Caco-2 (cell line): ENCODE measurements at regions of chr2 and their contacts with region 1.

Region 1: DNA sequence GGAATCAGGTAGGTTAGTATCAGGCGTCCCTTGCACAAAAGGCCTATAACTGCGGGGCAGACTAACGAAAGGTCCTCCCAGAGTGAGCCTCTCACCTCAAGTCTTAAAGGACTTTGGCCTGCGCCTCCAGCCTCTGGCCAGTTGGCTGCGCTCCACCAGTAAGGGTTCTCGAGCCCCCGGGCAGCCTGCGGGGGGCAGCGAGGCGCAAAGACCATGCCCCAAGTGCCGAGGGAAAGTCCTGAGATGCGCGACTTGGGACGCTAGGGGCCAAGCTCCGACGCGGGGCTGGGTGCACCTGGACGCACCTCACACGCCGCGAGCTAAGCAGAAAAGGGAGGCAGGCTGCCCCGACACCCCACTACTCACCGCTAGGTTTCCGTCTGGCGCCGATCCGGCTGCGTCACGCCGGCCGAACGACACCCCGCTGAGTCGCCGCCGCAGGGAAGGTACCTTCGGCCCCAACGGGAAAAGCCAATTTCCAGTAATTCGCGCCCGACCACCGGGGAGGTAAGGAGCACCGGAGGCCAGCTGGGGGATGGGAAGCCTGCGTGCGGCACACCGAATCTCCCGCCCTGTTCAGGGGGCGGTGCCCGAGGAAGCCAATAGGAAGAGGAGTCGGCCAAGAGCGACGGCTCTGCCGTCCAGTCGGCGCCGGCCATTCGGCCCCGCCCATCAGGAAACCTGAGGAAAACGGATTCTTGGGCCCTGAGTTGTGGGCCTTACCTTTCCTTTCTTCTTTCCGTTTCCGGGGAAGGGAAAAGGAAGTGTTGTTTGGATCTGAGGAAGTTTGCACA is at the start of gene ORC2:
- DNase-seq: peak; percentile 96 to 98
- H3K4me3 ChIP-seq: peak within 1 kb of the TSS; percentile 64
- H3K4me3 Mint-ChIP-seq: peak within 1 kb of the TSS; percentile 91
- H3K27ac Mint-ChIP-seq: peak within 1 kb of the TSS; percentile 97
- H3K4me1 ChIP-seq: peaks cover 30% of the 10 kb centered on the region
- H3K4me1 Mint-ChIP-seq: peaks cover 29% of the 10 kb centered on the region
- H3K27me3 ChIP-seq: no peaks in the 10 kb centered on the region
- H3K27me3 Mint-ChIP-seq: no peaks in the 10 kb centered on the region
- CTCF ChIP-seq: peak; percentile 70 to 76
- total RNA-seq, gene ORC2: 45.5 and 47.3 TPM in 2 replicates

Region 2: DNA sequence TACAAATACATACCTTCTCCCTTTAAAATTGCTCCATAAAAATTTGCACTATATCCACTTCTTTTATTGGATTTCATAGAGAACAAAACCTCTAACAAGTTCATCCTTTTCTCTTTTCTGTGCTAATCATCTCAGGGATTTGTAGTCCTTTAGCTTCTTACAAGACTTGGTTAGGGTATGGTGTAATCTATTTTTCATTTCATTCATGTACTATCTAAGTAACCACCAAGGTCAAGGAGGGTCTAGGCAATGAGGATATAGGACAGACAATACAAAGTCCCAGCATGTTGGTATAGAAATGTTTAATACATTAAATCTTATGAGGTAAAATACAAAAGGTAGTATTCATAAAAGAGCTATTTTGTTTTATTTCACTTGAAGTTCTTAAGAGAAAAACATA is 1034.7 kb before region 1 on chr2:
- CTCF ChIA-PET with region 1: no interaction called
- POLR2A ChIA-PET with region 1: interaction called, 10 read pairs
- intact Hi-C with region 1: no loop called
- DNase-seq: no peak
- H3K4me3 ChIP-seq: no peak overlapping the region
- H3K4me3 Mint-ChIP-seq: no peak overlapping the region
- H3K27ac Mint-ChIP-seq: peak overlapping the region; percentile 64
- H3K4me1 ChIP-seq: no peaks in the 10 kb centered on the region
- H3K4me1 Mint-ChIP-seq: no peaks in the 10 kb centered on the region
- H3K27me3 ChIP-seq: no peaks in the 10 kb centered on the region
- H3K27me3 Mint-ChIP-seq: no peaks in the 10 kb centered on the region
- CTCF ChIP-seq: no peak

Region 3: DNA sequence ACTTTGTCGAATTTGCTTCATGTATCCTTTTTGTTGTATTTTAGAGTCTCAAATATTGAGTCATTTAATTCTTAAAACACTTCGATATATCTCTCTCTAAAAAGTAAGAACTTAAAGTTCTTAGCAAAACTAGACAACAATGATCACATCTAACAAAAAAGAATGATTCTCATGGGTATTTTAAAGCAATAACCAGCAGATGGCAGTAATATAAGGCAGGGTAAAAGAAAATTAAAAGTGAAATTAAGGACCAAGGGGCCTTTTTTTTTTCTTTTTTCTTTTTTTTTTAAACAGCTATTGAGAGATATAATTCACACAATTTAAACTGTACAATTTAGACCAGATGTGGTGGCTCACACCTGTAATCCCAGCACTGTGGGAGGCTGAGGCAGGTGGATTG is 387.4 kb before region 1 on chr2:
- CTCF ChIA-PET with region 1: no interaction called
- POLR2A ChIA-PET with region 1: no interaction called
- intact Hi-C with region 1: no loop called
- DNase-seq: no peak
- H3K4me3 ChIP-seq: no peak overlapping the region
- H3K4me3 Mint-ChIP-seq: no peak overlapping the region
- H3K27ac Mint-ChIP-seq: no peak overlapping the region
- H3K4me1 ChIP-seq: no peaks in the 10 kb centered on the region
- H3K4me1 Mint-ChIP-seq: peaks cover 7% of the 10 kb centered on the region
- H3K27me3 ChIP-seq: no peaks in the 10 kb centered on the region
- H3K27me3 Mint-ChIP-seq: no peaks in the 10 kb centered on the region
- CTCF ChIP-seq: peak in 1 of 2 experiments; percentile 41

Region 4: GRCh38 chr2:200635251-200635650 is 328.1 kb before region 1 on chr2:
- CTCF ChIA-PET with region 1: no interaction called
- POLR2A ChIA-PET with region 1: no interaction called
- intact Hi-C with region 1: no loop called
- DNase-seq: no peak
- H3K4me3 ChIP-seq: no peak overlapping the region
- H3K4me3 Mint-ChIP-seq: no peak overlapping the region
- H3K27ac Mint-ChIP-seq: no peak overlapping the region
- H3K4me1 ChIP-seq: no peaks in the 10 kb centered on the region
- H3K4me1 Mint-ChIP-seq: no peaks in the 10 kb centered on the region
- H3K27me3 ChIP-seq: no peaks in the 10 kb centered on the region
- H3K27me3 Mint-ChIP-seq: no peaks in the 10 kb centered on the region
- CTCF ChIP-seq: no peak

Region 5: GRCh38 chr2:201008296-201008829 is 45.0 kb after region 1 on chr2:
- CTCF ChIA-PET with region 1: no interaction called
- POLR2A ChIA-PET with region 1: interaction called, 8 read pairs
- intact Hi-C with region 1: loop called (anchors 1 kb)
- DNase-seq: peak; percentile 78 to 87
- H3K4me3 ChIP-seq: no peak overlapping the region
- H3K4me3 Mint-ChIP-seq: peak overlapping the region; percentile 31
- H3K27ac Mint-ChIP-seq: peak overlapping the region; percentile 75
- H3K4me1 ChIP-seq: peaks cover 28% of the 10 kb centered on the region
- H3K4me1 Mint-ChIP-seq: peaks cover 19% of the 10 kb centered on the region
- H3K27me3 ChIP-seq: no peaks in the 10 kb centered on the region
- H3K27me3 Mint-ChIP-seq: no peaks in the 10 kb centered on the region
- CTCF ChIP-seq: no peak

Region 6: DNA sequence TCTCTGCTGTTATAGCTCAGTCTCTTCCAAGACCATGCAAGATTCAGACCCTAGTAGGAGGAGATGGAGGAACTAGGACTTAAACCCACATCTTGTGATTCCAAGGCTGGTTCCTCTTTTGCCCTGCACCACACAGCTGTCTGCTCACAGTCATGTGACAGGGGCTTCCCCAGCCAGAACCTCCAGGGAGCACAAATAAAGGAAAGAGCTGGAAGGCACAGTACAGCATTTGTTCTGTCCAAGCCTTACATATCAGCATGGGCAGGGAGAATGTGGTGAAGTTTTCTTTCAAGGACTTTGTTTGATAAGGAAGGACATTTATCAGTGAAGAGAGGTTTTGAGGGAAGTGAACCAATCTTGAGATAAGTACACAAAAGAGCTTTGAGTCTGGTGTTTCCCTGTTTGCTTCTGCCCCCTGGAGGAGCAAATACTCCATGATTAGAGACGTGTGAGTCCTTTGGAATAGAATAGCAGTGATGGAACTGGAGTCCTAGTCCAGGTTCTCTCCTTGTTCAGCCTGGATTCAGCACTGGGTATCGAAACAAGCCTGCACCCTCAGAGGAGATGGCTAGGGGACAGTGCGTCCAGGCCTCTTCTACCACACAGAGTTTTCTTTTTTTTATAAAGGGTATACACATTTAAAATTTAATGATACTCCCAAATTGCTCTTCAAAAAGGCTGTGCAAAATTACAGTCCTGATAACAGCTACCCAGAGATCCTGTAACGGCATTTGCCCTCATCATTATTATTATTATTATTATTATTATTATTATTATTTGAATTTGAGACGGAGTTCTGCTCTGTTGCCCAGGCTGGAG is 195.0 kb after region 1 on chr2:
- CTCF ChIA-PET with region 1: interaction called, 6 read pairs
- POLR2A ChIA-PET with region 1: no interaction called
- intact Hi-C with region 1: loop called (anchors 1 kb)
- DNase-seq: peak; percentile 84 to 86
- H3K4me3 ChIP-seq: no peak overlapping the region
- H3K4me3 Mint-ChIP-seq: peak overlapping the region; percentile 40
- H3K27ac Mint-ChIP-seq: peak overlapping the region; percentile 86
- H3K4me1 ChIP-seq: peaks cover 12% of the 10 kb centered on the region
- H3K4me1 Mint-ChIP-seq: peaks cover 13% of the 10 kb centered on the region
- H3K27me3 ChIP-seq: no peaks in the 10 kb centered on the region
- H3K27me3 Mint-ChIP-seq: no peaks in the 10 kb centered on the region
- CTCF ChIP-seq: peak; percentile 71 to 84

Region 7: DNA sequence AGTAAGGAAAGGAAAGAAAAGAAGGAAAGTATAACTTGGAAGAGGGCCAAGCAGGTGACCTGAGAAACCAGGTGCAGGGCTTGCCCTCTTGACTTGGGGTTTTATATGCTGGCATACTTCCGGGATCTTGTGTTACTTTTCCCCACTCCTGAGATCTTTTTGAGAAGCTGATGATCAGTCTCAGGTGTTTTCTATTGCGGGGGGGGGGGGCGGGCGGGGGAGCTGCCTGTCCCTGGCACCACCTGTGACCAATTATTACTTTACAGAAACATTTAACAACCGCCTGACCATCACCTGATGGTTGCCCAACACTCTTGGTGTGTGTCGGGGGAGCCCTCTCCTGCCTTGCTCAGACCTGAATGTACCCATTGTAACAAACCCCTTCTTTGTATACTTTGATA is 212.8 kb after region 1 on chr2:
- CTCF ChIA-PET with region 1: interaction called, 4 read pairs
- POLR2A ChIA-PET with region 1: no interaction called
- intact Hi-C with region 1: loop called (anchors 5 kb)
- DNase-seq: no peak
- H3K4me3 ChIP-seq: no peak overlapping the region
- H3K4me3 Mint-ChIP-seq: no peak overlapping the region
- H3K27ac Mint-ChIP-seq: no peak overlapping the region
- H3K4me1 ChIP-seq: no peaks in the 10 kb centered on the region
- H3K4me1 Mint-ChIP-seq: no peaks in the 10 kb centered on the region
- H3K27me3 ChIP-seq: no peaks in the 10 kb centered on the region
- H3K27me3 Mint-ChIP-seq: no peaks in the 10 kb centered on the region
- CTCF ChIP-seq: no peak